ENCODE measurements at regions of chr6 and their contacts with region 1.

Region 1: GRCh38 chr6:52995913-52996645 is 995 bp upstream of the GSTA4 start:
- DNase-seq: peak; percentile 20
- H3K4me3 ChIP-seq: peak overlapping the region; percentile 44 to 56
- H3K27ac ChIP-seq: peak overlapping the region; percentile 20 to 97
- H3K4me1 ChIP-seq: peaks cover 0 to 6% of the 10 kb centered on the region in 2 experiments; a peak in 2 of 4 replicates
- H3K27me3 ChIP-seq: no peaks in the 10 kb centered on the region
- CTCF ChIP-seq: no peak
- EP300 ChIP-seq: no peak
- RAD21 ChIP-seq: no peak

Region 2: GRCh38 chr6:52984247-52984646 is 11.8 kb before region 1 on chr6:
- CTCF ChIA-PET with region 1: interaction called, 16 read pairs
- POLR2A ChIA-PET with region 1: no interaction called
- DNase-seq: no peak
- H3K4me3 ChIP-seq: no peak overlapping the region
- H3K27ac ChIP-seq: no peak overlapping the region
- H3K4me1 ChIP-seq: no peaks in the 10 kb centered on the region
- H3K27me3 ChIP-seq: no peaks in the 10 kb centered on the region
- CTCF ChIP-seq: no peak
- EP300 ChIP-seq: no peak
- RAD21 ChIP-seq: no peak

Region 3: GRCh38 chr6:53015481-53015880 is 19.4 kb after region 1 on chr6:
- CTCF ChIA-PET with region 1: interaction called, 10 read pairs
- POLR2A ChIA-PET with region 1: no interaction called
- DNase-seq: no peak
- H3K4me3 ChIP-seq: no peak overlapping the region
- H3K27ac ChIP-seq: no peak overlapping the region
- H3K4me1 ChIP-seq: no peaks in the 10 kb centered on the region; a peak in 1 of 4 replicates
- H3K27me3 ChIP-seq: no peaks in the 10 kb centered on the region
- CTCF ChIP-seq: no peak
- EP300 ChIP-seq: no peak
- RAD21 ChIP-seq: no peak

Region 4: GRCh38 chr6:53064726-53065215 is 68.7 kb after region 1 on chr6:
- CTCF ChIA-PET with region 1: interaction called, 32 read pairs
- POLR2A ChIA-PET with region 1: interaction called, 5 read pairs
- DNase-seq: peak; percentile 88
- H3K4me3 ChIP-seq: peak overlapping the region; percentile 83 to 89
- H3K27ac ChIP-seq: peak overlapping the region; percentile 83 to 89
- H3K4me1 ChIP-seq: peaks cover 12 to 20% of the 10 kb centered on the region in 2 experiments; a peak in 3 of 4 replicates
- H3K27me3 ChIP-seq: no peaks in the 10 kb centered on the region
- CTCF ChIP-seq: 0 out of 2 replicates have a peak, but pooled peaks have one; percentile 9
- EP300 ChIP-seq: no peak
- RAD21 ChIP-seq: no peak

Region 5: GRCh38 chr6:53165293-53165692 is 169.2 kb after region 1 on chr6:
- CTCF ChIA-PET with region 1: no interaction called
- POLR2A ChIA-PET with region 1: no interaction called
- DNase-seq: no peak
- H3K4me3 ChIP-seq: no peak overlapping the region
- H3K27ac ChIP-seq: no peak overlapping the region
- H3K4me1 ChIP-seq: no peaks in the 10 kb centered on the region; a peak in 1 of 4 replicates
- H3K27me3 ChIP-seq: no peaks in the 10 kb centered on the region
- CTCF ChIP-seq: no peak
- EP300 ChIP-seq: no peak
- RAD21 ChIP-seq: no peak

Measured in SK-N-SH (cell line).